ENCODE measurements at regions of chr1 and their contacts with region 1.

Region 1: GRCh38 chr1:3618881-3619671 is 5.7 kb upstream of the TPRG1L start:
- DNase-seq: peak; percentile 79
- H3K4me3 ChIP-seq: no peak overlapping the region
- H3K27ac ChIP-seq: no peak overlapping the region
- H3K4me1 ChIP-seq: no peaks in the 10 kb centered on the region
- H3K27me3 ChIP-seq: no peaks in the 10 kb centered on the region
- CTCF ChIP-seq: peak; percentile 84

Region 2: GRCh38 chr1:3564921-3565827 is 53.9 kb before region 1 on chr1:
- intact Hi-C with region 1: loop called (anchors 5 kb)
- DNase-seq: no peak
- H3K4me3 ChIP-seq: no peak overlapping the region
- H3K27ac ChIP-seq: no peak overlapping the region
- H3K4me1 ChIP-seq: no peaks in the 10 kb centered on the region
- H3K27me3 ChIP-seq: no peaks in the 10 kb centered on the region
- CTCF ChIP-seq: peak; percentile 76

Measured in colonic mucosa (tissue), 4 donors.